ENCODE measurements at regions of chr1 and their contacts with region 1.

Region 1: DNA sequence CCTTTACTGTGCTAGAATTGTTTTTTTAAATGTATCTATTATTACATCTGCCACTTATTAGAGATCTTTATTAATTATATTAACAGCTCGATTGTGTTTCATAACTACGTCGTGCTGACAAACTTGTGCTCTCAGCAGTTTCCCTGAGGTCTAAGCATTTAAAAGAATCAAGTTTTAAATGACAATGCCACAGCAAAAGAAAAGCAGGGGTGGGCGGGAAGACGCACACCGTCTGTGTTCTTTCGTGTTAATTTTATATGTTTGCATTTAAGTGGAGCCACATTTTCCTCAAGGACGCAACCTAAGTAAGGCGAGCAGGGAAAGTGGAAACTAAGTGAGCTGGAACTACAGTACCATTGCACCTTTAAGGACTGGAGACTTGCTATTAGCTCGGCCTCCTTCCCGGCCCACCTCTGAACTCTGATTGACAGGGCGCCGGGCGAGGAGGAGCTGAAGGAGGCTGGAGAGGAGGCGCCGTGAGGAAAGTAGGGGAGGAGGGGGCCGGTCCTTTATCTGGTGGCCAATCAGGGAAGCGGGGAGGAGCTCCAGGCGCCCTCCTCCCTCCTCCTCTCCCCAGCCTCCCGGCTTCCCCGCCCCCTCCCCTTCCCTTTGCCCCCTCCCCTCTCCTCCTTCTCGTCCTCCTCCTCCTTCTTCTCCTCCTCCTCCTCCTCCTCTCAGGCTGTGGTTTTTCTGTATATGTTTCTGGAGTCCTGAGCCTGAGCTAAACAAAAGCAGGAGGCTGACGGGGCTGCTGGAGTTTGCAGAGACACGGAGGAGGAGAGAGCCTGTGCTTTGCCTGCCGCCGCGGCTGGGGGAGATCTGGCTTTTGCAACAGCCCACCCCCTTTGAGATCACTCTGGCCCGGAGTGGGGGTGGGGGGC is at the start of gene PBX1:
- DNase-seq: peak; percentile 99
- H3K4me3 ChIP-seq: peak within 1 kb of the TSS; percentile 64
- CTCF ChIP-seq: no peak

Region 2: GRCh38 chr1:164210211-164210739 is 348.4 kb before region 1 on chr1:
- in situ Hi-C with region 1: no loop called
- DNase-seq: no peak
- H3K4me3 ChIP-seq: no peak overlapping the region
- CTCF ChIP-seq: no peak

Region 3: GRCh38 chr1:164473544-164473943 is 85.2 kb before region 1 on chr1:
- in situ Hi-C with region 1: no loop called
- DNase-seq: no peak
- H3K4me3 ChIP-seq: no peak overlapping the region
- CTCF ChIP-seq: no peak

Region 4: GRCh38 chr1:164786980-164787833 is 228.5 kb after region 1 on chr1:
- in situ Hi-C with region 1: loop called (anchors 25 kb)
- DNase-seq: peak; percentile 81
- H3K4me3 ChIP-seq: no peak overlapping the region
- CTCF ChIP-seq: peak; percentile 93

Measured in astrocyte of the spinal cord (primary cell).